ENCODE measurements at regions of chr5 and their contacts with region 1.

Region 1: DNA sequence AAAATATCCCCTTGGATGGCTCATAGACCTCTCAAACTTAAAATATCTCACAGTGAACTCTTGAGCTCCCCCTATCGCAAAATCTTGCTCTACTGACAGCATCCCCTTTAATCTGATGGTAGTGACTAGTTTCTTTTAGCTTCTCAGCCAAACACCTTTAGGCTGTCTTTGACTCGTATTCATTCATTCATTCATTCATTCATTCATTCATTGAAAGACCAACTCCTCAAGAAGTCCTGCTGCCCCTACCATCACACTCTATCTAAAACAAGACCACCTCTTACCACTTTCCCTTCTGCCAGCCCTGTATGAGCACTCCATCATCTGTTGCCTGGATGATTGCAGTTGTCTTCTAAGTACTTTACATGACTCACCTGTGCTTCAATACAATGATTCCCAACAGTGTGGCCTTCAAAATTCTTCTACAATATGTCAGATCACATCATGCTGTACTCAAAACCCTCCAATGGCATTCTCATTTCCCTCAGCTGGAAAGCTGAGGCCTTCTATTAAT is 46.8 kb downstream of the ITGA2 start:
- DNase-seq: no peak
- H3K4me3 Mint-ChIP-seq: no peak overlapping the region
- H3K27ac Mint-ChIP-seq: no peak overlapping the region
- H3K4me1 Mint-ChIP-seq: peaks cover 72% of the 10 kb centered on the region
- H3K27me3 Mint-ChIP-seq: no peaks in the 10 kb centered on the region

Region 2: DNA sequence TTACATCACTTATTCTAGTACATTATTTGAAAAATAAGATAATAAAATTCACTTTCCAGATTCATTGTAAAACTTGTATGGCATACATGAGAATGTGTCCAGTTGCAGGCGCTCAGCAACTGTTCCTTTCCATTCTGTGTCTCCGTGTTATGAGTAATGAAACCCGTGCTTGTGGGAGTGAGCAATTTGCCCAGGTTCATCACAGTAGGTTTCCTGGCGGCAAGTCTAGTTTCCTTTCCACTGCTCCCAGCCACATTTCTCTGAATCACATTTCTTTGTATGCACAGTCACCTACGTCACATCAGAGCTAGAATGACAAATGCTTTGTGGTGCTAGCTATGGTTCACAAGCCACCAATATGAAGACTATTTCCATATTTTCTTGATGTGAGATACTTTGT is 33.7 kb after region 1 on chr5:
- CTCF ChIA-PET with region 1: interaction called, 11 read pairs
- POLR2A ChIA-PET with region 1: no interaction called
- DNase-seq: peak; percentile 68
- H3K4me3 Mint-ChIP-seq: no peak overlapping the region
- H3K27ac Mint-ChIP-seq: peak overlapping the region; percentile 71
- H3K4me1 Mint-ChIP-seq: peaks cover 28% of the 10 kb centered on the region
- H3K27me3 Mint-ChIP-seq: peaks cover 7% of the 10 kb centered on the region

Region 3: DNA sequence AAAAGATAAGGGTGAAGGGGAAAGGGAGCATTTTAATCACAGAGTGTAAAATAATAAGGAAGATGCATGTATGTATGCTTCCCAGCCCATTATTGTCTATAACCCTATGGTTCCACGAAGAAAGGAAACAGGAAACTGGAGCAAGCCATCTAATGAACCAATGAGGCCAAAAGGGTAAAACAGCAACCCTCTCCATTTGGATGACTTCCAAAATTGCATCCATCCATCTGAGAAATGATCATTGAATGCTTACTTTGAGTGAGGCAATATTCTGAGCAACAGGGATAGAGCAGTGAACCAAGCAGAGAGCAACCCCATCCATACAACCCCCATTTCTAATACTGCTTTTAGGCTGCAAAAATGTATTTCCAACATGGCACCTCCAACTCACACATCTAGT is 1227.5 kb after region 1 on chr5:
- CTCF ChIA-PET with region 1: no interaction called
- POLR2A ChIA-PET with region 1: no interaction called
- DNase-seq: no peak
- H3K4me3 Mint-ChIP-seq: no peak overlapping the region
- H3K27ac Mint-ChIP-seq: no peak overlapping the region
- H3K4me1 Mint-ChIP-seq: no peaks in the 10 kb centered on the region
- H3K27me3 Mint-ChIP-seq: no peaks in the 10 kb centered on the region